Activated CD8-positive, alpha-beta T cell treated with anti-CD3 and anti-CD28 coated beads, Interleukin-2, amount 10 ng/mL, durations not matched to agents 7 days and 5 days (primary cell): ENCODE measurements at regions of chr2 and their contacts with region 1.

Region 1: DNA sequence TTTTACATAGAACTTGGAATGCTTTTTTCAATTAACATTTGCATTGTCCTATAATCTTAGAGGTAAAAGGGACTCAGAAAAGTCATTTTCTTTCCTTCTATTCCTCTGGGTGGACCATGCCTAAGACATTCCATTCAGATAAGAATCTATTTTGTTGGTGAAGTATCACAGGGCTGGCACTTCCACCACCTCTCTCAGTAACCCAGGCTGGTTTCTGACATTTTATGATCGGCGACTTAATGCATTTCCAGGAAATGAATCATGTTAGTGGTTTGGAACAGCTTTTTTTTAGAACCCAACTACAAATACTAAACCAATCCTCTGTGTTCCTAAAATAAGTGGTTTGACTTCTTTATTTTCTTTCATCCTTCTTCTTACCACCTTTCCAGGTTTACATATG is 27.0 kb downstream of the GAD1 start:
- DNase-seq: no peak
- ATAC-seq: peak; percentile 75
- H3K4me3 Mint-ChIP-seq: no peak overlapping the region
- H3K27ac Mint-ChIP-seq: no peak overlapping the region
- H3K4me1 Mint-ChIP-seq: peaks cover 24% of the 10 kb centered on the region
- H3K27me3 Mint-ChIP-seq: peaks cover 5% of the 10 kb centered on the region

Region 2: GRCh38 chr2:170822290-170823087 is 21.2 kb before region 1 on chr2:
- CTCF ChIA-PET with region 1: interaction called, 10 read pairs
- POLR2A ChIA-PET with region 1: interaction called, 3 read pairs
- DNase-seq: peak; percentile 53
- ATAC-seq: peak; percentile 37
- H3K4me3 Mint-ChIP-seq: peak overlapping the region; percentile 52
- H3K27ac Mint-ChIP-seq: no peak overlapping the region
- H3K4me1 Mint-ChIP-seq: peaks cover 50% of the 10 kb centered on the region
- H3K27me3 Mint-ChIP-seq: peaks cover 84% of the 10 kb centered on the region

Region 3: DNA sequence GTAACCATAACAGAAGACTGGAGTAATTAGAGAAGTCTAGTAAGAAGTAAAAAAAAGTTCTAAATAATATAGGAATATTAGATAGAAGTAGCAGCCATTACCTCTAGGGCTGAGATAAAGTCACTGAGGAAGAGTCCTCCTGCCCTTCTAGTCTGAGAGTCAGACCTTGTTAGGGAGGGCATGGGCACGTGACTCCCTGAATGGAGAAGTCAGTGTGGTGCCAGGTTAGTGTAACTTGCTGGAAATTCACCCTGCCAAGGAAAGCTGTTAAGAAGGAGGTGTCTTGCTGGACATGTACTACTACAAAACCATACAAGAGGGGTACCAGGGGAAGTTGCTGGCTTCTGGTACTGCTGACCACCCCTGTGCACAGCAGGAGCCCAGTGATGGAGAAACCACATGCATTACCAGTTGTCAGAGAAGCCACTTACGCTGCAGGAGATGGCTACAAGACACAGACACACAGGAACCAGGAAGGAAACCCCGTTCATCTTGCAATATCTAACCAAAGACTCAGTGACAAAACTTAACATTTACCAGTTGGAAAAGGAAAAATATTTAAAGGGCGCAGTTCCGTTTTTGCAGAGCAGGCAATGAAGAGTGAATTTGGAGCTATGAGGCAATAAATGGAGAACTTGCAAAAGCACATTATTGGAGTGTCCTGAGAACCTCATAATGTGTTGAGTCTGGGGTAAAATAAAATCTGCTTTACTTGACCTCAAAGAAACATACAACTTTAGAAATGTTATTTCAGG is 394.3 kb after region 1 on chr2:
- CTCF ChIA-PET with region 1: no interaction called
- POLR2A ChIA-PET with region 1: no interaction called
- DNase-seq: no peak
- ATAC-seq: no peak
- H3K4me3 Mint-ChIP-seq: no peak overlapping the region
- H3K27ac Mint-ChIP-seq: peak overlapping the region; percentile 9
- H3K4me1 Mint-ChIP-seq: peaks cover 14% of the 10 kb centered on the region
- H3K27me3 Mint-ChIP-seq: peaks cover 12% of the 10 kb centered on the region